ENCODE measurements at regions of chr18 and their contacts with region 1.

Region 1: DNA sequence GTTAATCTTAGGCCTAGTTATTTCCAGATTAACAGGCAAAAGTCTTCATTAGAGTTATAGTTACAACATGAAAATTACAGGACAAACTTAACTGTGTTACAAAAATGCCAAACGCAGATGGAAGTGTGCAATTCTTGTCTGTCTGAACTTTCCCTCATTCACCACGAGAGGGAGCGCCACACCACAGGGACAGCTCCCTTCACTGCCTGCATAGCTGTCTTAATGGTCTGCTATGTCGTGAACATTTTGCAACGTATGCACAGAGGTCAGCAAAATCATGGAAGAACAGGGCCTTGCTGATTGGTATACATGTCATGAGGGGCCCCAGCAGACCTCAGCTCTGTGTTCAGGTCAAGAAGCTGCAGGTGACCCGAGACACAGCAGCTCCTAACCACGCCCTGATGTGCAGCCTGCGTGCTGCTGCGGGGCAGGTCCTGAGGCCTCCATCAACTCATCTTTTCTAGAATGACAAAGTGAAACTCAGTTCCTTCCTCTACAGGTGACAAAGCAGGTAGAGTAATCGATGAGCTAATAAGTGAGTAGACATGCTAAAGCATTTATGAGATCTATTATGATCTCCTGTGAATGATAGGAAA is 78.8 kb upstream of the ATP8B1 start:
- DNase-seq: peak; percentile 45 to 55 (median 51)
- H3K4me3 ChIP-seq: no peak overlapping the region
- H3K4me3 Mint-ChIP-seq: no peak overlapping the region
- H3K27ac ChIP-seq: no peak overlapping the region
- H3K27ac Mint-ChIP-seq: no peak overlapping the region
- H3K4me1 ChIP-seq: no peaks in the 10 kb centered on the region
- H3K4me1 Mint-ChIP-seq: no peaks in the 10 kb centered on the region
- H3K27me3 ChIP-seq: no peaks in the 10 kb centered on the region
- H3K27me3 Mint-ChIP-seq: peaks cover 0 to 4% (median 2%) of the 10 kb centered on the region in 3 donors
- CTCF ChIP-seq: peak; percentile 89

Region 2: GRCh38 chr18:57915865-57916582 is 34.1 kb after region 1 on chr18:
- intact Hi-C with region 1: no loop called
- DNase-seq: peak in 1 of 3 donors; percentile 9
- H3K4me3 ChIP-seq: no peak overlapping the region
- H3K4me3 Mint-ChIP-seq: no peak overlapping the region
- H3K27ac ChIP-seq: no peak overlapping the region
- H3K27ac Mint-ChIP-seq: peak overlapping the region in 3 of 7 donors; percentile 1 to 58 (median 13)
- H3K4me1 ChIP-seq: peaks cover 0 to 8% of the 10 kb centered on the region in 2 donors
- H3K4me1 Mint-ChIP-seq: peaks cover 8% of the 10 kb centered on the region
- H3K27me3 ChIP-seq: no peaks in the 10 kb centered on the region
- H3K27me3 Mint-ChIP-seq: peaks cover 1 to 6% (median 2%) of the 10 kb centered on the region in 3 donors
- CTCF ChIP-seq: no peak

Region 3: DNA sequence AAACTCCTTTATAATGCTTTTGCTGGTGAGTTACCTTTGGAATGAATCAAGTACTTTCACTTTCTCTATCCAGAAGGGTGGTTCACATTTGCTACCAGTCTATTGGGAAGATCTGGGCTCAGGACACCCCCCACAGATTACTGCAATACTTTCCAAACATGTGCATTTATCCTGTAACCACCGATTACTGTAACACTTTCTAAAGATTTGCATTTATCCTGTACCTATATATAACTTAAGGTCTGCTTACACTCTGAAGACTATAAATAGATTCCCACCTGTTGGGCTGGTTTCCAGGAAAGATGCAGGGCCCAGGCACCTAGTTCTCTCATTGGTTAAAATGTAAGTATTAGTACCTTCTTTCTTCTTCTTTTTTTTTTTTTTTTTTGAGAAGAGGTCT is 49.1 kb after region 1 on chr18:
- intact Hi-C with region 1: no loop called
- DNase-seq: no peak
- H3K4me3 ChIP-seq: no peak overlapping the region
- H3K4me3 Mint-ChIP-seq: peak overlapping the region in 1 of 2 donors; percentile 23
- H3K27ac ChIP-seq: no peak overlapping the region
- H3K27ac Mint-ChIP-seq: peak overlapping the region in 1 of 7 donors; percentile 42
- H3K4me1 ChIP-seq: no peaks in the 10 kb centered on the region
- H3K4me1 Mint-ChIP-seq: no peaks in the 10 kb centered on the region
- H3K27me3 ChIP-seq: no peaks in the 10 kb centered on the region
- H3K27me3 Mint-ChIP-seq: peaks cover 0 to 2% (median 0%) of the 10 kb centered on the region in 3 donors
- CTCF ChIP-seq: no peak

Region 4: GRCh38 chr18:58124475-58124874 is 242.6 kb after region 1 on chr18:
- intact Hi-C with region 1: loop called in 1 of 2 experiments (anchors 5 kb)
- DNase-seq: no peak
- H3K4me3 ChIP-seq: no peak overlapping the region
- H3K4me3 Mint-ChIP-seq: no peak overlapping the region
- H3K27ac ChIP-seq: no peak overlapping the region
- H3K27ac Mint-ChIP-seq: no peak overlapping the region
- H3K4me1 ChIP-seq: no peaks in the 10 kb centered on the region
- H3K4me1 Mint-ChIP-seq: no peaks in the 10 kb centered on the region
- H3K27me3 ChIP-seq: no peaks in the 10 kb centered on the region
- H3K27me3 Mint-ChIP-seq: peaks cover 2 to 5% (median 3%) of the 10 kb centered on the region in 3 donors
- CTCF ChIP-seq: no peak

Region 5: DNA sequence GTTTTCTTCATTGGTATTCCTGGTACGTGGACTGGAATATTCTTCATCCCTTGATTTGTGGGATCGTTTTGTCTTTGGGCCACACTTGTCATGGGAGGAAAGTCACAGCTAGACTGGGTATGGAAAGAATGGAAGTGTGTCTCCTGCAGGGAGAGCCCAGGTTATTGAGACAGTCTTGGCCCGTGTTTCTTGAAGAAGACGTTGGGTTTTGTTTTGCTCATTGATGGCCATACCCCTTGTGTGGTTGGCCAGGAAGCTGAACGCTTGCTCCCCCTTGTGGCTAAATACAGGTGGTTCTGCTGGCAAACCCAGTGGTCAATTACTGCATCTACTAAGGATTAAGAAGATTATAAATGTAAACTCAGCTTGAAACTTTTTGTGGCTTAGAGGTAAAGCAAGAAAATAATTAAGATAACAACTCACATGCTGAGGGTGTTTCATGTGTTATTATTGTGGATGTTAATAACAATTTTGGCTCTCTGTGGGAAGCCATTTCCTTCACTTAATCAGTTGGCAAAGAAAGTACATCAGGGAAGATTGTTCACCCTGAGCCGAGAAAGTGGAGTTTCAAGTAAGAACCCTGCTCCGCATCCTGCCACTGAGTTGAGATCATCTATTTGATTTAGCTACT is 253.9 kb after region 1 on chr18:
- intact Hi-C with region 1: loop called in 1 of 2 experiments (anchors 5 kb)
- DNase-seq: peak; percentile 52 to 60 (median 58)
- H3K4me3 ChIP-seq: no peak overlapping the region
- H3K4me3 Mint-ChIP-seq: peak overlapping the region in 1 of 2 donors; percentile 22
- H3K27ac ChIP-seq: no peak overlapping the region
- H3K27ac Mint-ChIP-seq: no peak overlapping the region
- H3K4me1 ChIP-seq: no peaks in the 10 kb centered on the region
- H3K4me1 Mint-ChIP-seq: peaks cover 5% of the 10 kb centered on the region
- H3K27me3 ChIP-seq: no peaks in the 10 kb centered on the region
- H3K27me3 Mint-ChIP-seq: peaks cover 5 to 6% (median 5%) of the 10 kb centered on the region in 3 donors
- CTCF ChIP-seq: peak; percentile 88